PC-9 (cell line): ENCODE measurements at regions of chr9 and their contacts with region 1.

Region 1: GRCh38 chr9:87570000-87570908 is 72.6 kb downstream of the DAPK1 start:
- DNase-seq: peak in 1 of 2 experiments; percentile 58
- H3K4me3 ChIP-seq: no peak overlapping the region
- H3K27ac ChIP-seq: peak overlapping the region; percentile 65
- H3K4me1 ChIP-seq: peaks cover 39% of the 10 kb centered on the region
- H3K27me3 ChIP-seq: no peaks in the 10 kb centered on the region
- CTCF ChIP-seq: no peak

Region 2: DNA sequence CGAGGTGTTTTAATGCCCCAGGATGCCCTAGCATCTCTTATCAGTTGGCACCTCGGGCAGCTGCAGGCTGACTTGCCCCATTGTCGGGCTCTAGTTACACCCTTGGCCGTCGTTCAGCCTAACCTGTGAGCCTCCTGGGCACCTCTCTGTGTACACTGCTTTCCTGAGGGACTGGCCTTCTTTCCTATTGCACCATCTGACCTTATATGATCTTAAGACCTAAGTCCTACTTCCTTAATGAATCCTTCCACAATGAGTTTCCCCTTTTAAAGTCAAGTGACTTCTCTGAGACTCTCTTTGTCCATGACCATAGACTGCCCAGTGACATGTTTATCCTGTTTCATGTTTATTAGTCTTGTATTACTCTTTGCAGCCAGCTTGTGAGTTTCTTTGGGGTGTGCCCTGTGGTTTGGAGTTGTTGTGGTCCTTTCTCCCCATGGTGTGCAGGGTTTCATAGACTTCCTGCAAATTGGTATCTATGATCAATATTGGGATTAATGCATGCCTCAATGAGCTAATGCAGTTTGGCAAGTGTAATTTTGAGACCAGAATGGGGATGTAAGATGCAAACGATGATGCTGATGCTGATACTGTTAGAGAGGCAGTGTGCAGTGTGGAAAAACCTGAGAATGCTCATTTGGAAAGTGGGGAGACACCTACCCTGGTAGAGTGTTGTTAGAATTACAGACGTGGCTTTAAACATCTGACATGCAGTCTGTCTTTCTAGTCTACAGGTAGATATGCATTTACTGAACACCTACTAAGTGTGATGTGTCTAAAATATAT is 67.6 kb before region 1 on chr9:
- CTCF ChIA-PET with region 1: no interaction called
- POLR2A ChIA-PET with region 1: interaction called, 6 read pairs
- intact Hi-C with region 1: loop called (anchors 2 kb)
- DNase-seq: peak; percentile 82 to 98
- H3K4me3 ChIP-seq: peak overlapping the region; percentile 29; the same call in 1 of the 2 replicates
- H3K27ac ChIP-seq: peak overlapping the region; percentile 83
- H3K4me1 ChIP-seq: peaks cover 81% of the 10 kb centered on the region
- H3K27me3 ChIP-seq: no peaks in the 10 kb centered on the region
- CTCF ChIP-seq: no peak

Region 3: GRCh38 chr9:87640385-87640795 is 70.1 kb after region 1 on chr9:
- CTCF ChIA-PET with region 1: no interaction called
- POLR2A ChIA-PET with region 1: interaction called, 3 read pairs
- intact Hi-C with region 1: loop called (anchors 2 kb)
- DNase-seq: peak in 1 of 2 experiments; percentile 32
- H3K4me3 ChIP-seq: no peak overlapping the region
- H3K27ac ChIP-seq: no peak overlapping the region
- H3K4me1 ChIP-seq: no peaks in the 10 kb centered on the region
- H3K27me3 ChIP-seq: no peaks in the 10 kb centered on the region
- CTCF ChIP-seq: no peak

Region 4: GRCh38 chr9:87803622-87804345 is 233.5 kb after region 1 on chr9:
- CTCF ChIA-PET with region 1: no interaction called
- POLR2A ChIA-PET with region 1: no interaction called
- intact Hi-C with region 1: no loop called
- DNase-seq: peak in 1 of 2 experiments; percentile 21
- H3K4me3 ChIP-seq: no peak overlapping the region
- H3K27ac ChIP-seq: no peak overlapping the region
- H3K4me1 ChIP-seq: no peaks in the 10 kb centered on the region
- H3K27me3 ChIP-seq: no peaks in the 10 kb centered on the region
- CTCF ChIP-seq: no peak